Body of pancreas (tissue), 4 donors: ENCODE measurements at regions of chr22 and their contacts with region 1.

Region 1: DNA sequence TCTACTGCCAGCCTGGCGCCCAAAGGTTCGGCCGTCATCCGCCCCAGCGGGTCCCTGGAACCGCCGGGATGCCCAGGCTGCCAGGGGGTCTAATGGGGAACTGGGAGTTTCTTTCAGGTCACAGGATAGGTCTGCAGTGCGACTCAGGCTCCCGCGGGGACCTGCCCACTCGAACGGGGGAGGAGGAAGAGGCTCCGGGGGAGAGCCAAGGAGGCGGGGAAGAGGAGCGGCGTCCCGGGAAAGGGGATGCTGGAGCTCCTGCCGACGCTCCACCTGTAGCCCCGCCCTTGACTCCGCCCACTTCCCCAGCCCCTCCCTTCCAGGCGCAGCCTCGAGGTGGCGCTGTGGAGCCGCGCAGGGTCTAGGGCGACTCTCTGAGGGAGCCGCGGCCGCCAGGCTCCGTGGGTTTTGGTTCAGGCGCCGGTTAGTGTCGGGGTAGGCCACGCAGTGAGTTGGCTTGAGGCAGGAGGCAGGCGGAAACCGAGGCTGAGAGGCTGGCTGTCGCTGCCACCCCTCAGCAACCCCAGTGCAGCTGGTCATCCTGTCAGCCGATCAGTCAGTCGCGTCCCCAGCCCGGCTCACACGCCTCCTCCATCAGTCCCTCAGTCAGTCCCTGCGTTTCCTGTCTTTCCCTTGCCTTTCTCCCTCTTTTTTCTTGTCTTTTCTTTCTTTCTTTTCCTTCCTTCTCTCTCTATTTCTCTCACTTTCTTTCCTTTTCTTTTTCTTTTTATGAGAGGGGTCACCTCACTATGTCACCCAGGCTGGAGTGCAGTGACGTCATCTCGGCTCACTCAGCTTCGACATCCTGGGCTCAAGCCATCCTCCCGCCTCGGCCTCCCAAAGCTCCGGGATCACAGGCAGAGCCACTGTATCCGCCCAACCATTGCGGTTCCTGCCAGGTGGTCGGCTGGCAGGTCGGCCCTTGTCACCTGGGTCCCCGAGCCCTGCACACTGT is 26.4 kb downstream of the YWHAH start:
- DNase-seq: peak; percentile 78 to 83 (median 81)
- ATAC-seq: peak; percentile 89
- H3K4me3 ChIP-seq: peak overlapping the region in 1 of 2 donors; percentile 4
- H3K27ac ChIP-seq: peak overlapping the region in 1 of 4 donors; percentile 35
- H3K4me1 ChIP-seq: peaks cover 21% of the 10 kb centered on the region
- H3K27me3 ChIP-seq: no peaks in the 10 kb centered on the region
- CTCF ChIP-seq: peak; percentile 83 to 96 (median 91)
- POLR2A ChIP-seq: peak in 1 of 3 donors; percentile 27

Region 2: DNA sequence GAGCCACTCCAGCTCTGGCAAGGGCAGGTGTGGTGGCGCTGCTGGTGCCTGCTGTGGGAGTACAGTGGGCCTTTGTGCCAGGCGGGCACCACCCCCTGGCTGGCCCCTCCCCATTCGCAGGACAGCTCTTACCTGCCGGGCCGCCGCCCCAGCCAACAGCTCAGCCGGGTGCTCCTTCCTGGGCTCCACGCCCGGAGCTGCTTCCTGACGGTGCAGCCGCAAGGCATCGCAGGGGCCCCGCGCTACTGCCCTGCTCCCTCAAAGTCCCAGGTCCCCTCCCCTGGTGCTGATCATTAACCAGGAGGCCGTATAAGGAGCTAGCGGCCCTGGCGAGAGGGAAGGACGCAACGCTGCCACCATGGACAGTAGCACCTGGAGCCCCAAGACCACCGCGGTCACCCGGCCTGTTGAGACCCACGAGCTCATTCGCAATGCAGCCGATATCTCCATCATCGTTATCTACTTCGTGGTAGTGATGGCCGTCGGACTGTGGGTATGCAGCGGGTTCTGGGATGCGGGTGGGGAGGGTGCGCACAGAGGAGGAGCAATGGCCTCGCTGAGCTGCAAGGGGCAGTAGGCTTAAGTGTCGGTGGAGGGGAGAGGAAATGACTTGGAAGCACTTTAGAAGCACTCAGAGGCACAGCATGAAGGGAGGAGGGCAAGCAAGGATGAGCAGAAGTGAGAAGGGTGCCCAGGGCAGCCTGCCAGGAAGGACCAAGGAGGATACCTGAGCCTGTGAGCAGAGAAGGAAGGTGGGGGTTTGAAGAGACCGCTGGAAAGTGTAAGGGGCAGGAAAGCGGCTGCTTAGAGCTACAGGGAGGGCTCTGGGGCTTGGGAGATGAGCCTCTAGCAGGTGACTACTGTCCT is 72.4 kb after region 1 on chr22 and contains the start of gene SLC5A1:
- intact Hi-C with region 1: no loop called
- DNase-seq: peak; percentile 68 to 86 (median 84)
- ATAC-seq: peak; percentile 96
- H3K4me3 ChIP-seq: no peak within 1 kb of the TSS
- H3K27ac ChIP-seq: peak within 1 kb of the TSS in 3 of 4 donors; percentile 38 to 51 (median 47)
- H3K4me1 ChIP-seq: peaks cover 11% of the 10 kb centered on the region
- H3K27me3 ChIP-seq: no peaks in the 10 kb centered on the region
- CTCF ChIP-seq: no peak
- POLR2A ChIP-seq: peak in 2 of 3 donors; percentile 24 to 33
- total RNA-seq, gene SLC5A1: 0.33 to 7.0 TPM

Region 3: DNA sequence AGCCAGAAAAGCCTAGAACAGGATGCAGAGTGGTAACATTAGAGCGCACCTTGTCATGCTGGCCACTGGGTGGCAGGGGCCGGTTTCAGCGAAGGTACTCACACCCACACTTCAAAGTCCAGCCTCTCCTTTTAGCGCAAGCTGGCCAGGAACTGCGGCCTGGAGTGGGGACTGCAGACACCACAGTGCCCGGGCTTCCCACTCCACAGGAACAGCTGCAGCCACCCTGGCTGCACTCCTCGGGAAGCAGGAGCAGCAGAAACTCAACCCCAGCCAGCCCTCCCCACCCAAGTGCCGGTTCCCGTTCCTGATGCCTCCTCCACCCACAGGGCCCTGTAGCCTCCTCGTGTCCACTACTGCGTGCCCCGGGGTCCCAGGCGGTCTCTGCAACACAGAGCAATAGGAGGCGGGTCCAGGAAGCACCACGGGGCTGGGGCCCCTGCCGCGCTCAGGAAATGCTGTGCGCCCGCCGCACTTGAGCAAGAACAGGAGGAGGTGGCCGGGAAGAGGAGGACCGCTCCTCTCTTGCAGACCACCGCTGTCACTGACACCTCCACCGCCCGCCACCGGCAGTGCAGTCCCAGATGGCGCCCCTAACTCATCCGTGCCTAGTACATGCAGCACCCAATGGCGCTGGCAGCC is 231.9 kb after region 1 on chr22:
- intact Hi-C with region 1: loop called (anchors 10 kb)
- DNase-seq: peak; percentile 40 to 73 (median 68)
- ATAC-seq: peak; percentile 59
- H3K4me3 ChIP-seq: no peak overlapping the region
- H3K27ac ChIP-seq: no peak overlapping the region
- H3K4me1 ChIP-seq: peaks cover 14% of the 10 kb centered on the region
- H3K27me3 ChIP-seq: peaks cover 0 to 6% of the 10 kb centered on the region in 2 donors
- CTCF ChIP-seq: peak; percentile 23 to 72 (median 55)
- POLR2A ChIP-seq: no peak

Region 4: GRCh38 chr22:32474635-32475467 is 504.1 kb after region 1 on chr22 and contains the start of gene FBXO7:
- intact Hi-C with region 1: loop called (anchors 10 kb)
- DNase-seq: peak; percentile 92 to 93 (median 93)
- ATAC-seq: peak; percentile 92
- H3K4me3 ChIP-seq: peak within 1 kb of the TSS; percentile 55 to 80
- H3K27ac ChIP-seq: peak within 1 kb of the TSS; percentile 92 to 99 (median 96)
- H3K4me1 ChIP-seq: peaks cover 20% of the 10 kb centered on the region
- H3K27me3 ChIP-seq: no peaks in the 10 kb centered on the region
- CTCF ChIP-seq: peak in 6 of 7 experiments; percentile 18 to 55 (median 29)
- POLR2A ChIP-seq: peak; percentile 78 to 88 (median 86)
- total RNA-seq, gene FBXO7: 54.2 to 56.7 TPM